Gastrocnemius medialis (tissue), 4 donors: ENCODE measurements at regions of chr18 and their contacts with region 1.

Region 1: GRCh38 chr18:23503038-23503962 is at the start of gene RMC1:
- DNase-seq: peak; percentile 93 to 94
- ATAC-seq: peak; percentile 94
- H3K4me3 ChIP-seq: peak within 1 kb of the TSS; percentile 77 to 89 (median 82)
- H3K27ac ChIP-seq: peak within 1 kb of the TSS; percentile 91 to 94 (median 92)
- H3K4me1 ChIP-seq: peaks cover 16 to 22% of the 10 kb centered on the region in 2 donors
- H3K27me3 ChIP-seq: no peaks in the 10 kb centered on the region
- CTCF ChIP-seq: peak in 3 of 5 experiments; percentile 6 to 38 (median 29)
- POLR2A ChIP-seq: peak; percentile 74 to 81
- total RNA-seq, gene RMC1: 20.1 to 27.3 (median 25.2) TPM

Region 2: GRCh38 chr18:23131693-23132319 is 371.5 kb before region 1 on chr18:
- in situ Hi-C with region 1: no loop called
- intact Hi-C with region 1: loop called (anchors 2 kb)
- DNase-seq: peak in 1 of 2 donors; percentile 28
- ATAC-seq: peak; percentile 49 to 55
- H3K4me3 ChIP-seq: no peak overlapping the region
- H3K27ac ChIP-seq: no peak overlapping the region
- H3K4me1 ChIP-seq: peaks cover 6 to 12% of the 10 kb centered on the region in 2 donors
- H3K27me3 ChIP-seq: peaks cover 7 to 18% (median 7%) of the 10 kb centered on the region in 3 donors
- CTCF ChIP-seq: peak; percentile 71 to 81 (median 75)
- POLR2A ChIP-seq: no peak

Region 3: DNA sequence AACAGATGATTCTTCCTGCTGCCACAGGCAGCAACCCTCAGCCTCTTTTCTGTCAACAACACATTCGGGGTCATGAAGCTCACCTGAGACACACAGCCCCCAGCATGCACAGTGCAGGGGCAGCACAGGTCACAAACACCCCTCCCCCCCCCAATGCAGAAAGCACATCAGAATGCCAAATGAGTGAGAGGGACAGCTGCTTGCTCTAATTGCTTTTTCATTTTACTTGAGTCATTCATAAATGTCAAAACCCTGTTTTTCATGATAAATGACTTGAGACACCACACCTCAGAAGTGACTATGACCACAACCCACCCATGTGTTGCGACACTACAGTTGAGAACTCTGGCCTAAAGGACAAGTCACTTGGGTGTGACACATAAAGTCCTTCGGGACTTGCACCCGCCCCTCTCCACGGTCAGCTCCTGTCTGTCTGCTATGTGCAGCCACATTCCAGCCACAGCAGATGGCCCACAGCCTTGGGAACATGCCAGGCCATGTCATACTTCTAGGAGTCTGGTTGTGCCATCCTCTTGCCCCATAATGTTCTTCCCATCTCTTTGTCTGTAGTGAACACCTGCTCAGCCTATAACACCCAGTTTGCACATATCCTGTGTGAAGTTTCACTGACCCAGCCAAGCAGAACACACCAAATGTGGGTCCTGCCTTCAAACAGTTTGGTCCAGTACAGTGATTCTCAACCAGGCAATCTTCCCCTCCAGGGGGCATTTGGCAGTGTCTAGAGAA is 80.5 kb before region 1 on chr18:
- in situ Hi-C with region 1: no loop called
- intact Hi-C with region 1: no loop called
- DNase-seq: peak; percentile 65 to 75
- ATAC-seq: peak; percentile 91 to 94
- H3K4me3 ChIP-seq: no peak overlapping the region
- H3K27ac ChIP-seq: no peak overlapping the region
- H3K4me1 ChIP-seq: peaks cover 0 to 5% of the 10 kb centered on the region in 2 donors
- H3K27me3 ChIP-seq: no peaks in the 10 kb centered on the region
- CTCF ChIP-seq: no peak
- POLR2A ChIP-seq: no peak

Region 4: GRCh38 chr18:23452728-23453679 is 50.3 kb before region 1 on chr18 and contains the start of gene RIOK3:
- in situ Hi-C with region 1: no loop called
- intact Hi-C with region 1: loop called (anchors 1 kb)
- DNase-seq: peak; percentile 99
- ATAC-seq: peak; percentile 96 to 97
- H3K4me3 ChIP-seq: peak within 1 kb of the TSS; percentile 84 to 97 (median 89)
- H3K27ac ChIP-seq: peak within 1 kb of the TSS; percentile 94 to 96 (median 94)
- H3K4me1 ChIP-seq: peaks cover 19 to 35% of the 10 kb centered on the region in 2 donors
- H3K27me3 ChIP-seq: no peaks in the 10 kb centered on the region
- CTCF ChIP-seq: peak in 2 of 5 experiments; percentile 8 to 10
- POLR2A ChIP-seq: peak; percentile 93 to 96
- total RNA-seq, gene RIOK3: 77.3 to 220 (median 114) TPM

Region 5: DNA sequence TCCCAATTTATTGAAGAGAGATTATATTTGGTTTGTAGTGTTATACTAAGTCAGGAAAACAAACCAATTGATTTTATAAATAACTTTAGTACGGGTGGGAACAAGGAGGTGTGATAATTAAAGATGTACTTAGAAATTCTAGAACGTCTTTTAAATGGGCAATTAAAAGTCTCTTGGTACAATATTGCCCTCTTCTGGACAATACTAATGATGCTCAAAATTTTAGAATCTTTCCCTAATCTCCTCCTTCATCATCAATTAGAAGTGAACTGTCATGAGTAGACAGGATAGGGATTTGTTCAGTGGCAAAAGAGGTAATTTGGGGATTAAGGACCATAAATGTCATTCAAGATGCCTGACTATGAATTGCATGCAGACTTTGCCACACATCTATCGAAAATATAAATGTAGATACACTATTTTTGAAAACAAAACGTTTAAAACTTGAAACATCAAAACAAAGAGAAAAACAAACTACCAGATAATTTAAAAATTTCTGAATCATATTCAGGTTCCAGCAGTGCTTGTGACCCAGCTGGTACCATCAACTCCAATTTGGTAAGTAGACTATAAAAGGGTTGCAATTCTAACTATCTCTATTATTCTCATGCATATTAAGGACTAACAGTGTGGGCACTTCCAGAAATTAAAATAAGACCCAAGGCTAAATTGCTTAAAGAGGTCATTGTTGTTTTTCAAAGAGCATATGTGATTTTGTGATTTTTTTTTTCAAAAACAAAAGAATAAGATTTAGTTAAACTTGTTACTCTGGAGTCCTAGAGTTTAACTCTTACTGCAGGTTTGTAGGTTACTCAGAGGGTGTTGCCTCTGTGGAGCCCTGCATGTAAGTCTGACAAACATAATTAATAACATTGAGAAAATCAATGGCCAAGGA is 309.5 kb after region 1 on chr18:
- in situ Hi-C with region 1: loop called in 1 of 4 experiments (anchors 25 kb)
- intact Hi-C with region 1: no loop called
- DNase-seq: no peak
- ATAC-seq: no peak
- H3K4me3 ChIP-seq: no peak overlapping the region
- H3K27ac ChIP-seq: no peak overlapping the region
- H3K4me1 ChIP-seq: peaks cover 5 to 6% of the 10 kb centered on the region in 2 donors
- H3K27me3 ChIP-seq: no peaks in the 10 kb centered on the region
- CTCF ChIP-seq: peak; percentile 17 to 54 (median 25)
- POLR2A ChIP-seq: no peak